GM12878 (cell line): ENCODE measurements at regions of chr19 and their contacts with region 1.

Region 1: DNA sequence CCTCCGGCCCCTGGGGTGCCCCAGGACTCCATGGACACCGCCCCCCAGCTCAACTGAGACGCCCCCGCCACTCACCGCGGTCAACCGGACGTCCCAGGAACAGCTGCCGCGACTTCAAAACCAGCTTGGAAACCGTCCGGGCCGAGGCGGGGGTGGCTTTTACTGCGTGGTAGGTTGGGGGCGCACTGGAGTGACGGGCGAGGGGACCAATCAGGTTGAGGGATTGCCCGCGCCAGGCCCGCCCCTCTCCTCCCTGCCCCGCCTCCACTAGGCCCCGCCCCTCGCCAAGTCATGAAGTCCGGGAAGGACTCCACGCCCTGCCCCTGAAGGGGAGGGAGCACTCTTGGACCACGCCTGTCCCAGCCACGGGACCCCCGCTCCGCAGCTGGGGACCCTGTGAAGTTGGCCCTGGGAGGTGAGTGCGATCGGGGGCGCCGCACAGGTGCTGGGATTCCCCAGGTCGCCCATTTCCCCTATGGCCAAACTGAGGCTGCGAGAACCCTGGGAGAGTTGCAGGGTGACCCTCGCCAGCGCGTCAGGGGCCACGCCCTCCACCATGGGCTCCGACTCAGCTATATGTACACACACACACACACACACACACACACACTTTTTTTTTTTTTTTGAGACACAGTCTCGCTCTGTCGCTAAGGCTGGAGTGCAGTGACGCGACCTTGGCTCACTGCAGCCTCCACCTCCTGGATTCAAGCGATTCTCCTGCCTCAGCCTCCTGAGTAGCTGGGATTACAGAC is at the start of gene PLIN3:
- DNase-seq: peak; percentile 65
- ATAC-seq: peak; percentile 86
- H3K4me3 ChIP-seq: peak within 1 kb of the TSS; percentile 98
- H3K27ac ChIP-seq: peak within 1 kb of the TSS; percentile 85
- H3K4me1 ChIP-seq: peaks cover 15% of the 10 kb centered on the region
- H3K27me3 ChIP-seq: no peaks in the 10 kb centered on the region
- CTCF ChIP-seq: no peak
- EP300 ChIP-seq: no peak
- POLR2A ChIP-seq: peak; percentile 74
- RAD21 ChIP-seq: no peak
- polyA plus RNA-seq, gene PLIN3: 7.7 to 19.0 TPM

Region 2: DNA sequence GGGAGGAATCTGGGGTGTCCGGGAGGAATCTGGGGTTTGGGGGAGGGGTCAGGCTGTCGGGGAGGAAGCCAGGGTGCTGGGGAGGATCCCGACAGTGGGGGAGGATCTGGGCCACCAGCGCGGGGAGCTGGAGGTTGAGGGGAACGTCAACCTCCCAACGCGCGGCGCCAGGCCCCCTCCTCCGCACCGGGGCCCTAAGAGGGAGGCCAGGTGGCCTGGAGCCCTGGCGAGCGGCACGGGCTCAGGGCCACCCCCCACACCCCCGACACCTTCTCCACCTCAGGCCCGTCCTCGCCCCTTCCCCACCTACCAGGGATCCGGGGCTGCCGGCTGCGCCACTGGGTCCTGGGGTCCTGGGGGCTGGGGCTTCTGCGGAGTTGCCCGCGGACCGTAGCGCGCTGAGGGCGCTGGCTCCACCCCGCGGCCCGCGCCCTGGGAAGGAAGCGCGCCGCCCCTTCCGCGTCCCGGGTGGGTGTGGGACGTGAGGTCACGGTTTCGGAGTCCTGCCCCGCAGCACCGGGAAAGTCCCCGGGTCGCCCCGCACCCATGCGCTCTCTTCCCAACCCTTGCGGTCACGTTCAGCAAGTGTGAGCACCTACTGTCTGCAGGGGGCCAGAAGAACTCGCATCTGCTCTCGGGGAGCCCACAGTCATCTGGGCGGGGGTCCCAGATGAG is 36.3 kb before region 1 on chr19 and contains the start of gene TICAM1:
- CTCF ChIA-PET with region 1: interaction called, 7 read pairs
- POLR2A ChIA-PET with region 1: interaction called, 19 read pairs
- RAD21 ChIA-PET with region 1: interaction called, 6 read pairs
- SMC1A ChIA-PET with region 1: interaction called, 6 read pairs
- in situ Hi-C with region 1: no loop called
- intact Hi-C with region 1: no loop called
- DNase-seq: no peak
- ATAC-seq: peak; percentile 80
- H3K4me3 ChIP-seq: peak within 1 kb of the TSS; percentile 95
- H3K27ac ChIP-seq: peak within 1 kb of the TSS; percentile 92
- H3K4me1 ChIP-seq: no peaks in the 10 kb centered on the region
- H3K27me3 ChIP-seq: no peaks in the 10 kb centered on the region
- CTCF ChIP-seq: no peak
- EP300 ChIP-seq: no peak; a peak in 1 of 4 replicates
- POLR2A ChIP-seq: peak; percentile 86
- RAD21 ChIP-seq: no peak
- polyA plus RNA-seq, gene TICAM1: 0.31 to 0.99 TPM

Region 3: DNA sequence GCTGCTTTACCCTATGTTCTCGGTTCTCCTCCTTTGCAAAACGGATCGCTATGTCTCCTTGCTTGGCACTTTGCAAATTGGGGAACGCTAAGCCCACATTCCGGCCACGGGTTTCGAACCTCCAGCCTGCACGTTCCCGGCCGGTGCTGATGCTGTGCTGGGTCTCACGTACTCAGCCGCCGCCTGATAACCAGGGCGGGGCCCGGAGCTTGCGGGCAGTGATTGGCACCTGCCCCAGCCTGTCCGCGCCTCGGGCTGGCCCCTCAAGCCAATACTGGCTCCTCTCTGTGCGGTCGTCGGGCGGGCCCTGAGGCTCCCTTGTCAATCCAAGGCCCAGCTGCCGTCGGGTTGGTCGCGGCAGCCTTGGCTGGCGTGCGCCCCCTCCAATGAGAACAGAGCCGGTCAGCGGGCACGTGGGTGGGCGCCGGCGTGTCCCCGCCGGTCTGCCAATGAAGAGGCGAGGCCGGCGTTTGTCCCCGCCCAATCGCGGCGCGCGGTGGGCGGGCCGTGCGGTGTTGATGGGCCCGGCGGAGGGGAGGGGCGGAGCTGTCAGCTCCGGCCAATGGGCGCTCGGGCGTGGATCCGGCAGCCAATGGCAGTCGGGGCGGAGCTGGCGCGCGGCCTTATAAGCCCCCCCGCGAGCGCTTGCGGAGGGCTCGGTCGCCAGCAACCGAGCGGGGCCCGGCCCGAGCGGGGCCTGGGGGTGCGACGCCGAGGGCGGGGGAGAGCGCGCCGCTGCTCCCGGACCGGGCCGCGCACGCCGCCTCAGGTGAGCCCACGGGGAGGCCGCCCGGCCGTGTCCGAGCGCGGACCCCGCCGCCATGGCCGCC is 101.0 kb after region 1 on chr19 and contains the start of gene KDM4B:
- CTCF ChIA-PET with region 1: interaction called, 5 read pairs
- POLR2A ChIA-PET with region 1: interaction called, 7 read pairs
- RAD21 ChIA-PET with region 1: interaction called, 6 read pairs
- SMC1A ChIA-PET with region 1: no interaction called
- in situ Hi-C with region 1: no loop called
- intact Hi-C with region 1: loop called (anchors 10 kb)
- DNase-seq: peak; percentile 96
- ATAC-seq: peak; percentile 97
- H3K4me3 ChIP-seq: peak within 1 kb of the TSS; percentile 95
- H3K27ac ChIP-seq: peak within 1 kb of the TSS; percentile 67
- H3K4me1 ChIP-seq: peaks cover 12% of the 10 kb centered on the region
- H3K27me3 ChIP-seq: no peaks in the 10 kb centered on the region
- CTCF ChIP-seq: no peak
- EP300 ChIP-seq: no peak
- POLR2A ChIP-seq: peak; percentile 98
- RAD21 ChIP-seq: no peak
- polyA plus RNA-seq, gene KDM4B: 0.47 to 1.8 TPM